ENCODE measurements at regions of chr22 and their contacts with region 1.

Region 1: GRCh38 chr22:20771918-20772625 is 1.8 kb upstream of the SERPIND1 start:
- DNase-seq: no peak
- H3K4me3 ChIP-seq: no peak overlapping the region
- H3K27ac ChIP-seq: no peak overlapping the region
- H3K4me1 ChIP-seq: no peaks in the 10 kb centered on the region
- H3K27me3 ChIP-seq: no peaks in the 10 kb centered on the region
- CTCF ChIP-seq: no peak
- EP300 ChIP-seq: no peak
- RAD21 ChIP-seq: no peak

Region 2: DNA sequence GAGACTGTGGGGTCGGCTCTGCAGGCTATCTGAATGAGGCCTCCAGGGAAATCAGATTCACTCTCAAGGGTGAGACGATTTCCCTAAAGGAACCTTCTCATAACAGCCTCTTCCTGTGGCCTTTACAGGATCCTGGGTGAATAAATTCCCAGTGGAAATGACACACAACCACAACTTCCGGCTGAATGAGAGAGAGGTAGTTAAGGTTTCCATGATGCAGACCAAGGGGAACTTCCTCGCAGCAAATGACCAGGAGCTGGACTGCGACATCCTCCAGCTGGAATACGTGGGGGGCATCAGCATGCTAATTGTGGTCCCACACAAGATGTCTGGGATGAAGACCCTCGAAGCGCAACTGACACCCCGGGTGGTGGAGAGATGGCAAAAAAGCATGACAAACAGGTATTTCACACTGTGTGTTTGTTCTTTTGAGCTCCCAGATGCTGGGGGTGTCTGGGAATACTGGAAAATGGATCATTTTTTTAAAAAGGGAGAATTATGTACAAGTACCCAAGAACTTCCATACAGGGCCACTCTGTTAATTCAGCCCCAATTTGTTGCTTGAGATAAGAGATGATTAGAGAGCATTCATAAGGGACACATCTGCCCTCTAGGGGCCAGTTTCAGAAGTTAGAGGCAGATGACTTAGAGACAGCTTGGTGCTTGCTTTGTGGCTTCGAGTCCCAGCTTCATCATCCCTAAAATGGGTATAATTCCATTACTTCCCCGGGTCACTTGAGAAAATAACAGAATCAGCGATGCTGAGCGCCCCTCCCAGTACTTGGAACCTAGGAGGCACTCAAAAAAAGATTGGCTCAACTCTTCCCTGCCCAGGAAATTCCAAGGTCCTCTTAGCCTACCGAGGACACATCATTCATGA is 12.0 kb after region 1 on chr22:
- CTCF ChIA-PET with region 1: interaction called, 21 read pairs
- POLR2A ChIA-PET with region 1: no interaction called
- DNase-seq: peak; percentile 59
- H3K4me3 ChIP-seq: no peak overlapping the region
- H3K27ac ChIP-seq: no peak overlapping the region
- H3K4me1 ChIP-seq: no peaks in the 10 kb centered on the region
- H3K27me3 ChIP-seq: no peaks in the 10 kb centered on the region
- CTCF ChIP-seq: peak; percentile 78
- EP300 ChIP-seq: no peak
- RAD21 ChIP-seq: peak; percentile 53